HepG2 (cell line): ENCODE measurements at regions of chr4 and their contacts with region 1.

Region 1: GRCh38 chr4:71441186-71442169 is 102.7 kb downstream of the SLC4A4 start:
- DNase-seq: no peak
- ATAC-seq: no peak
- H3K4me3 ChIP-seq: no peak overlapping the region
- H3K27ac ChIP-seq: no peak overlapping the region
- H3K4me1 ChIP-seq: no peaks in the 10 kb centered on the region
- H3K27me3 ChIP-seq: no peaks in the 10 kb centered on the region
- CTCF ChIP-seq: no peak
- EP300 ChIP-seq: no peak
- POLR2A ChIP-seq: no peak
- RAD21 ChIP-seq: no peak

Region 2: DNA sequence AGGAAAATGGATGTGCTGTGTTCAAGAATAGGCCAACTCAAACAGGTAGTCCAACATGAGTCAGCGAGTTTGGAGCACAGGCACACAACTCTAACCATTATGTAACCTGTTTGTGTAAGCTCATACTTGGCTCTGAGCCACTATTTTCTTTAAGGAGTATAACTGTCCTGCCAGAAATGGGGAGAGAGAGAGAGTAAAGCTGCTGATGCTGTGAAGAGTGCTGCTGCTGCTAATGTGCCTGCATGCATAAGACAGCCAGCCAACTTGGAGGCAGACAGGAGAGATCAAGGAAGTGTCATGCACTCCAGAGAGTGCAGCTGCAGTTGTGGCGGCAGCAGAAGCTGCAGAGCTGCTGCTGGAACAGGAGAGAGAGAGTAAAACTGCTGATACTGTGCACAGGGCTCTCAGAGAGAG is 1457.4 kb before region 1 on chr4:
- CTCF ChIA-PET with region 1: no interaction called
- POLR2A ChIA-PET with region 1: no interaction called
- in situ Hi-C with region 1: no loop called
- intact Hi-C with region 1: loop called (anchors 10 kb)
- DNase-seq: peak; percentile 79
- ATAC-seq: peak; percentile 93
- H3K4me3 ChIP-seq: no peak overlapping the region
- H3K27ac ChIP-seq: no peak overlapping the region
- H3K4me1 ChIP-seq: peaks cover 17% of the 10 kb centered on the region
- H3K27me3 ChIP-seq: no peaks in the 10 kb centered on the region
- CTCF ChIP-seq: no peak
- EP300 ChIP-seq: peak in 1 of 2 experiments; percentile 66; a peak in 2 of 4 replicates
- POLR2A ChIP-seq: no peak
- RAD21 ChIP-seq: no peak

Region 3: DNA sequence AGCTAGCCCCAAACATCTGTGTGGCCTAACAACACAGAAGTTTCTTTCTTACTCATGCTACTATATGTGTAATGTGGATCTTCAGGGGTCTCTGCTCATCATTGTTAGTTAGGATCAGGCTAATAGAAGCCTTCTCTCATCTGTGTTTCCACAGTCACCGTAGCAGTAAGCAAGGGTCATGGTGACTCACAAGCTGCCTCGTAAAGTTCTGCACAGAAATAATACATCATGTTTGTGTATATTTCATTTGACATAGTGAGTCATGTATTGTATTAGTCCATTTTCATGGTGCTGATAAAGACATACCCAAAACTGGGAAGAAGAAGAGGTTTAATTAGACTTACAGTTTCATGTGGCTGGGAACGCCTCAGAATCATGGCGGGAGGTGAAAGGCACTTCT is 63.9 kb before region 1 on chr4:
- CTCF ChIA-PET with region 1: no interaction called
- POLR2A ChIA-PET with region 1: no interaction called
- in situ Hi-C with region 1: no loop called
- intact Hi-C with region 1: no loop called
- DNase-seq: no peak
- ATAC-seq: no peak
- H3K4me3 ChIP-seq: no peak overlapping the region
- H3K27ac ChIP-seq: no peak overlapping the region
- H3K4me1 ChIP-seq: no peaks in the 10 kb centered on the region
- H3K27me3 ChIP-seq: no peaks in the 10 kb centered on the region
- CTCF ChIP-seq: no peak
- EP300 ChIP-seq: no peak
- POLR2A ChIP-seq: no peak
- RAD21 ChIP-seq: no peak

Region 4: DNA sequence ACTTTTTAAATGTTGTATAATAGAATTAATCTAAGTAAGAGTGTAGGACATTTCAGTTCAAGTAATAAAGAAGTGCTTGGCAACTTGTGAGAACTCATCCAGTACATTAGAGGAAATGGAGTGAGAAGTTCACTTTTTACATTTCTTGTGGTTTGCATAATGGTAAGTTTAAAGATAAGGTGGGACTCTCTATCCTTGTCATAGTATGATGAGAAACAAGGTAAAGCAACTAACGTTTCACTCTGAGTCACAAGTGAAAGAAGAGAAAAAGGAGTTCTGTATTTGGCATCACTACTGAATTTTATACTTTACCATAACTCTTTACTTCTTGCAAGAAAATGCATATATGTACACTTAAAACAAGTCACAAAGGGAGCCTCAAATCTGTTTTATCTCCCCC is 116.8 kb after region 1 on chr4:
- CTCF ChIA-PET with region 1: no interaction called
- POLR2A ChIA-PET with region 1: no interaction called
- in situ Hi-C with region 1: no loop called
- intact Hi-C with region 1: no loop called
- DNase-seq: no peak
- ATAC-seq: no peak
- H3K4me3 ChIP-seq: no peak overlapping the region
- H3K27ac ChIP-seq: no peak overlapping the region
- H3K4me1 ChIP-seq: no peaks in the 10 kb centered on the region
- H3K27me3 ChIP-seq: no peaks in the 10 kb centered on the region; a peak in 1 of 5 replicates
- CTCF ChIP-seq: no peak
- EP300 ChIP-seq: no peak
- POLR2A ChIP-seq: no peak
- RAD21 ChIP-seq: no peak